H1 (cell line): ENCODE measurements at regions of chr21 and their contacts with region 1.

Region 1: DNA sequence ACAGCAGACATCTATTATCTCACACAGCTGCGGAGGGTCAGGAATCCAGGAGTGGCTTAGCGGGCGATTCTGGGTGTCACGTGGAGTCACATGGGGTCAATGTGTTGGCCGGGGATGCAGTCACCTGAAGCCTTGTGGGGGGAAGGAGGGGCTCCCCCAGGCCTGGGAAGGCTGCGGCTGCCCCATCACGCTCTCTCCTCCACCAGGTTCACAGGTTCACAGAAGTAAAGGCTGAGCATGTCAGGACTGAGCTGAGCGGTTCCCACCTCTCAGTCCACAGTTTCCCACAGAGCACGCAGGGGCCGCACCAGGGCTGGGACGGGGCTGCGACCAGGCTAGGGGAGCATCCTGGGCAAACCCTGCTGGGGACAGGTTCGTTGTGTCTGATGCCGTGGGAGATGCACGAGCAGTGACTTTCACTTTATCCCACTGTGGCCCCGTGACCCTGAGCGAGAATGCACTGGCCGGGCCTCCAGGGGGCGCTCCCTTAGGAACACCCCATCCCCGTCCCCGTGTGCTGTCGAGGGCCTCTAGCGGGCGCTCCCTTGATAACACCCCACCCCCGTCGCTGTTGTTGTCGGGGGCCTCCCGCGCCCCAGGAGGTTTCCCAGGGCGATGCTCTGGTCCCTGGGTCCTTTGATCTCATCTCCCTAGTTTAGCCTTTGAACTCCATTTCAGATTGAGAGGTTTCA is 73.2 kb upstream of the TRAPPC10 start:
- DNase-seq: peak; percentile 49 to 96
- H3K4me3 ChIP-seq: 0 out of 8 replicates have a peak overlapping the region, but pooled peaks of 1 of the 4 experiments have one; percentile 21
- H3K27ac ChIP-seq: no peak overlapping the region
- H3K4me1 ChIP-seq: peaks cover 0 to 2% (median 0%) of the 10 kb centered on the region in 4 experiments; a peak in 2 of 7 replicates
- H3K27me3 ChIP-seq: no peaks in the 10 kb centered on the region; a peak in 1 of 7 replicates
- CTCF ChIP-seq: peak in 2 of 3 experiments; percentile 99 to 100; a peak in 3 of 4 replicates
- EP300 ChIP-seq: 0 out of 3 replicates have a peak, but pooled peaks of 1 of the 2 experiments have one; percentile 40
- POLR2A ChIP-seq: no peak
- RAD21 ChIP-seq: peak; percentile 85 to 90

Region 2: GRCh38 chr21:43816611-43817478 is 122.1 kb before region 1 on chr21:
- CTCF ChIA-PET with region 1: interaction called, 42 read pairs
- POLR2A ChIA-PET with region 1: no interaction called
- DNase-seq: no peak
- H3K4me3 ChIP-seq: no peak overlapping the region
- H3K27ac ChIP-seq: no peak overlapping the region
- H3K4me1 ChIP-seq: peaks cover 0 to 9% (median 8%) of the 10 kb centered on the region in 4 experiments; a peak in 6 of 7 replicates
- H3K27me3 ChIP-seq: no peaks in the 10 kb centered on the region
- CTCF ChIP-seq: peak in 2 of 3 experiments; percentile 59 to 75; a peak in 3 of 4 replicates
- EP300 ChIP-seq: no peak
- POLR2A ChIP-seq: no peak
- RAD21 ChIP-seq: peak; percentile 35 to 44; a peak in 3 of 4 replicates

Region 3: GRCh38 chr21:43834146-43834905 is 104.6 kb before region 1 on chr21:
- CTCF ChIA-PET with region 1: interaction called, 11 read pairs
- POLR2A ChIA-PET with region 1: interaction called, 3 read pairs
- DNase-seq: no peak
- H3K4me3 ChIP-seq: no peak overlapping the region
- H3K27ac ChIP-seq: no peak overlapping the region
- H3K4me1 ChIP-seq: no peaks in the 10 kb centered on the region
- H3K27me3 ChIP-seq: no peaks in the 10 kb centered on the region
- CTCF ChIP-seq: no peak
- EP300 ChIP-seq: no peak
- POLR2A ChIP-seq: no peak
- RAD21 ChIP-seq: no peak

Region 4: DNA sequence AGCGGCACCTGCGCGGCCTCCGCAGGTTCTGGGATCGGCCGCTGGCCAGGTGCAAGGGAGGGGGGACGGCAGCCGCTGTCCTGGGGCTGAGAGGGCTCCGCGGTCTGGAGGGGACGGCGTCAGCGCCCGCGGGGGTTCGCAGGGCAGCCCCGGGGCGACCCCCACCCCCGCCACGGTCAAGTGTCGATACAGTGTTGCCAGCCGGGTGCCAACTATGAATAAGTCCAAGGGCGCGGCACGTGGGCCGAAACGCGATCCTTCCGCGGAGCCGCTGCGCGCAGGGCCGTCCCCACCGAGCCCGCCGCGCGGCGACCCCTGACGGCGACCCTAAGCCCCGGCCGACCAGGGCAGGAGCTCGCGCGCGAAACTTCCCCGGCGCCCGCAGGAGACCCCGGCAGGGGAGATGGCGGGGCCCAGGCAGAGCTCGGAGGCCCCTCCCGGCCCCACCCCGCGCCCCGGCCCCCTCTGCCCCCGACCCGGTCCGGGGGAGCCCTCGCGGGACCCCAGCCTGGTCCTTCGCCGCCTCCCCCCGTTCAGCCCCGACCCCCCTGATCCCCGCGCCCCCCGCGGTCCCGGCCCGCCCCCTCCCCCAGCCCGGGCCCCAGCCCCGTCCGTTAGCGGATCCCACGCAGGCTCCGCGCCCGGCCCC is 74.5 kb before region 1 on chr21:
- CTCF ChIA-PET with region 1: interaction called, 11 read pairs
- POLR2A ChIA-PET with region 1: no interaction called
- DNase-seq: peak in 1 of 2 experiments; percentile 70
- H3K4me3 ChIP-seq: peak overlapping the region; percentile 32 to 64 (median 40)
- H3K27ac ChIP-seq: no peak overlapping the region
- H3K4me1 ChIP-seq: peaks cover 0 to 7% (median 4%) of the 10 kb centered on the region in 4 experiments; a peak in 4 of 7 replicates
- H3K27me3 ChIP-seq: peaks cover 0 to 16% (median 10%) of the 10 kb centered on the region in 4 experiments; a peak in 6 of 7 replicates
- CTCF ChIP-seq: no peak
- EP300 ChIP-seq: no peak
- POLR2A ChIP-seq: no peak
- RAD21 ChIP-seq: 0 out of 4 replicates have a peak, but pooled peaks of 1 of the 2 experiments have one; percentile 0

Region 5: DNA sequence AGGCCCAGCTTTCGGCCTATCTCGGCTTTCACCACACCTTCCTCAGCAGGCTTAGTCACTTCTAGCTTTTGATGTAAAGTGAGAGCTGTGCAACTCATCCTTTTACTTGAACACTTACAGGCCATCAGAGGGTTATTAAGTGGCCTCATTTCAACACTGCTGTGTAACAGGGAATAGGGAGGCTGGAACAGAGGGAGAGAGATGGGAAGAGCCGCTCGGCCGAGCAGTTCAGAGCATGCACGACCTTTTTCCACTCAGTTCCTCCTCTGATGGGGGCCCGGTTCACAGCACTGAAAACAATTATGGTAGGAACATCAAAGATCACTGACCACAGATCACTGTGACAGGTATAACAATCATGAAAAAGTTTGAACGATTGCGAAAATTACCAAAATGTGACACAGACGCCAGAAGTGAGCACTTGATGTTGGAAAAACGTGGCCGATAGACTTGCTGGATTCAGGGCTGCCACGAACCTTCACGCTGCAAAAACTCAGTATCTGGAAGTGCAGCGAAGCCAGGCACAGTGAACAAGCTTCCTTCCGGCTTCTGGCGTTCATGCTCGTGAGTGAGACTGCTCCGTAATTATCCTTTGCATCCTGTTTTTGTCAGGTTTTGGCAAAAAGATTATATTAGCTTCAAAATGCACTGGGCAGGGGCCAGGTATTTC is 45.2 kb before region 1 on chr21:
- CTCF ChIA-PET with region 1: interaction called, 13 read pairs
- POLR2A ChIA-PET with region 1: no interaction called
- DNase-seq: no peak
- H3K4me3 ChIP-seq: no peak overlapping the region
- H3K27ac ChIP-seq: no peak overlapping the region
- H3K4me1 ChIP-seq: peaks cover 0 to 9% (median 7%) of the 10 kb centered on the region in 4 experiments; a peak in 5 of 7 replicates
- H3K27me3 ChIP-seq: no peaks in the 10 kb centered on the region
- CTCF ChIP-seq: no peak
- EP300 ChIP-seq: no peak
- POLR2A ChIP-seq: no peak
- RAD21 ChIP-seq: no peak

Region 6: GRCh38 chr21:43921979-43922945 is 16.6 kb before region 1 on chr21:
- CTCF ChIA-PET with region 1: interaction called, 188 read pairs
- POLR2A ChIA-PET with region 1: no interaction called
- DNase-seq: no peak
- H3K4me3 ChIP-seq: no peak overlapping the region
- H3K27ac ChIP-seq: no peak overlapping the region
- H3K4me1 ChIP-seq: peaks cover 3 to 26% (median 15%) of the 10 kb centered on the region in 4 experiments
- H3K27me3 ChIP-seq: peaks cover 0 to 4% (median 0%) of the 10 kb centered on the region in 4 experiments; a peak in 2 of 7 replicates
- CTCF ChIP-seq: no peak
- EP300 ChIP-seq: no peak
- POLR2A ChIP-seq: no peak
- RAD21 ChIP-seq: no peak

Region 7: DNA sequence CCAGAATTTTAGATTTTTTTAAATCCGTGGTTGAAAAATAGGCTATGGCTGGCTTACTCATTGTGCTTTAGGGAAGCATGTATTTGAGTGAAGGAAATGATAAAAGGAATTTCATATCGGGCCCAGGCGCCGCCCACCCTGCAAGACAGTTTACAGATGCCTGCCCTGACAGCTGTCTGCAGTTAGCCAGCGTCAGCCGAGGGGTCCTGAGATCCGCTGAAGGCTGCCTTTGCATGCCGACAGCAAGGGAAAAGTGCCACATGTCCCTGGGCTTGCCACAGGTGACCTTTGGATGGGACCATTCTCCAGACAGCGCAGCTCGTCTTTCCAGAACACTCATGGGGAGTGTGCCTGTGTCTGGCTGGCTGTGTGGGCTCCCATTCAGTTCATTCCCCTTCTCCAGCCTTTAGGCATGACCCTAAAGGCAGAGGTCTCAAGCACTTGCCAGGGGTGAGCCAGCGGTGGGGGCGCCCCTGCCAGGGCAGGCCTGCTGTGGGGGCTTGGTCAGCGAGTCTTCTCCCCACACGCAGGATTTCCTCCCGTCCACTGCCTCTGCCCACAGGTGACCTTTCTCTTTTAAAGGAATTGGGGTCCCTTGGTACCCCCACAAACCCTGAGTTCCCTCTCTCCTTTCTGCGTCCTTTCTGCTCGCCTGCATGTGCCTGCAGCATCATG is 27.2 kb after region 1 on chr21:
- CTCF ChIA-PET with region 1: interaction called, 16 read pairs
- POLR2A ChIA-PET with region 1: no interaction called
- DNase-seq: no peak
- H3K4me3 ChIP-seq: no peak overlapping the region
- H3K27ac ChIP-seq: no peak overlapping the region
- H3K4me1 ChIP-seq: no peaks in the 10 kb centered on the region
- H3K27me3 ChIP-seq: no peaks in the 10 kb centered on the region
- CTCF ChIP-seq: no peak
- EP300 ChIP-seq: no peak
- POLR2A ChIP-seq: no peak
- RAD21 ChIP-seq: no peak